Panc1 (cell line): ENCODE measurements at regions of chr10 and their contacts with region 1.

Region 1: DNA sequence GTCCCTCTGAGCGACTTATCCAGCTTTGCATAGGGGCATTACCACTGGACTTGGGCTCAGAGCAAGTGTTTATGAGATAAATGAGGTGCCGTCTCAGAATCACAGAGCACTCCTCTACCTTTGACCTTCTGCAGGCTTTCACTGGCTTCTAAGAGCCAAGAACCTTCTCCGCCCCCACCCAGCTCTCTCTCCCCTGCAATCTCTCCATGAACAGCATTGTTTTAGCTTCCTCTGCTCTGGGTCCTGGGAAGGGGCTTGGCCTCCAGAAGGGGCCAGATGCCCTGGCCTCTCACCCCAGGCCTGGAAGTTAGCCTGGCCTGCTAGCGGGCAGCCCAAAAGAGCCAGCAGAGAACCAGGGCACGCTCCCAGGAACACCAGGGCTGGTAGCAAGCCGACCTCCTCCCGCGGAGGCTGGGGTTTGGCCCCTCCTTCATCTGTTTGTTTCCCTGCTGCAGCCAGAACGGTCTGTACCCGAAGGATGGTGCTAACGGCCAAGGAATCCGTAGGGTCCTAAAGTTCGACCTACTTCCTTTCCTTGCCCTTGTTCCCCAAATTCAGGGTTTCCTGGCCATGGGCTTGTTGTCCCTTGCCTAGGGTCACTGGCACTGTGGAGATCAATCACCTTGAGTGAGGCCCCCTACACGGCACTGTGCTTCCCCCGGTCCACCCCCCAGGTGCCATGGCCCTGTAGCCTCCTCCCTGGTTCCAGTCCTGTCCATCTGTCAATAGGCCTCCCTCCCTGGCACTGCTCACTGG is 18.7 kb upstream of the DDIT4 start:
- DNase-seq: no peak
- ATAC-seq: peak; percentile 94
- H3K4me3 ChIP-seq: peak overlapping the region in 1 of 2 experiments; percentile 34; a peak in 2 of 4 replicates
- H3K27ac ChIP-seq: peak overlapping the region; percentile 92
- H3K4me1 ChIP-seq: peaks cover 32% of the 10 kb centered on the region
- H3K27me3 ChIP-seq: no peaks in the 10 kb centered on the region
- CTCF ChIP-seq: no peak

Region 2: DNA sequence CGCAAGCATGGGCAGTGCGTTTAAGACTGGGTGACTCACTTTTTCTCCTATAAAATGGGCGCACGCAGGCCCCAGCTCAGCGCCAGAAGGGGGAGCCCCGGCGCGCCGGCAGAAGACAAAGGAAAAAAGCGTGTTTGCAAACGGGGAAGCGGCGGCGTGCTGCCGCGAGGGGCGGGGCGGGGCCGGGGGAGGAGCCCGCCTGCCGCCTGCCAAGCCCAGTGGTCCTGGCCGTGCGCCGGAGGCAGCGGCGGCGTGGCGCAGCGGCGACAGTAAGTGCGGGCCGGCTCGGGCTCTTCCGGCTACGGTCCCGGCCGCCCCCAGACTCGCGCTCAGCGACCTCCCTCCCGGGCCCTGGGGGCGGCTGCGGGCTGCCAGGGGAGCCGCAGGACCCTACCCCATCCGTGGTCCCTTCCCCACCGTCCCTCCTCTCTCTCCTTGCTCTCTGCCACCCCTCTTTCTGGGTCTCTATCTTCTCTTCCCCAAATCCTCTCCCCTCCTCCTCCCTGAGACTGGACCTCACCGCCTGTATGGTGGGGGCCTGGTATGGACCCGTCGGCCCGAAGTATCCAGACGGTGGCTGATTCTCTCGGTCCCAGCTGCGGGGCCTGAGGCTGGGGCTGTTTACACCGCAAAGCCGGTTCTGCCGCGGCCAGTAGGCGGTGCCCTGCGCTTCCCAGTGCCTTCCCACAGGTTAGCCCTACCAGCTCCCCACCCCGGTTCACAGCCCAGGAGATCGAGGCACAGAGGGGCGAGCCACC is 935.8 kb before region 1 on chr10 and contains the start of gene SLC29A3:
- CTCF ChIA-PET with region 1: no interaction called
- POLR2A ChIA-PET with region 1: no interaction called
- in situ Hi-C with region 1: no loop called
- intact Hi-C with region 1: no loop called
- DNase-seq: no peak
- ATAC-seq: peak; percentile 95
- H3K4me3 ChIP-seq: peak within 1 kb of the TSS; percentile 75 to 80
- H3K27ac ChIP-seq: peak within 1 kb of the TSS; percentile 69
- H3K4me1 ChIP-seq: peaks cover 10% of the 10 kb centered on the region
- H3K27me3 ChIP-seq: no peaks in the 10 kb centered on the region
- CTCF ChIP-seq: peak; percentile 93
- total RNA-seq, gene SLC29A3: 7.6 TPM

Region 3: GRCh38 chr10:71963756-71964668 is 291.0 kb before region 1 on chr10 and contains the start of gene CHST3:
- CTCF ChIA-PET with region 1: no interaction called
- POLR2A ChIA-PET with region 1: interaction called, 16 read pairs
- in situ Hi-C with region 1: no loop called
- intact Hi-C with region 1: no loop called
- DNase-seq: no peak
- ATAC-seq: peak; percentile 74
- H3K4me3 ChIP-seq: peak within 1 kb of the TSS; percentile 88 to 89
- H3K27ac ChIP-seq: peak within 1 kb of the TSS; percentile 97
- H3K4me1 ChIP-seq: peaks cover 36% of the 10 kb centered on the region
- H3K27me3 ChIP-seq: no peaks in the 10 kb centered on the region
- CTCF ChIP-seq: no peak
- total RNA-seq, gene CHST3: 44.6 TPM

Region 4: DNA sequence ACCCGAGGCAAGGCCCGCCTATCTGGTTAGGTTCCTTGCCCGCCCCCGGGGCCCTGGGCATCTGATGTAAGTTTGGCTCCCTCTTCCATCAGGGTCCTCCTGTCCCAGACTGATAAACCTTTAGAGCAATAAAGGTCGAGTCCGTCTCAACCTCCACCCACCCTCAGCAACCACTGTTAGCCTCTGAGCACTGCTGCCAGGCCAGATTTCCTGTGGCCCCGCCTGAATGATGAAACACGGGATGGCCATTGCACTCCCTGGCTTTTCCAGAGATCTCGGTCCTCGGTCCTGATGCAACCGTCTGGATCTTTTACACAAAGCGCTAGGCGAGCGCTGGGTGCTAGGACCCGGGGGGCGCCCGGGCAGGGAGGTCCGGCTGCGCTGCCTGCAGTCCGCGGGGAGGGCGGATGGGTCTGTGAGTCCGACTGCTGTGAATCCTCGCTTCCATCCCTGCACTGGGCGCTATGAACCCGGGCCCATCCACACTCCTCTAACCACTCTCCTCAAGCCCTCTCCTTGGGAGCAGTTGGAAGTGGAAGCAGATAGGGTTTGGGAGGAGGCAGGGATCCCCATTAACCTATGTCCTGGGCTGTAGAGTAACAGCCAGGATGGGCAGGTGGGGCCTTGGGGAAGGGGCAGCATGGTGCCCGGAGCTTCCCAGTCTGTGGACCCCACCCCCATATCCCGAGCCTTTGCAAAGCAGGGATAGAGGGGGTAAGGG is 17.9 kb after region 1 on chr10:
- CTCF ChIA-PET with region 1: no interaction called
- POLR2A ChIA-PET with region 1: no interaction called
- in situ Hi-C with region 1: no loop called
- intact Hi-C with region 1: no loop called
- DNase-seq: no peak
- ATAC-seq: peak; percentile 52
- H3K4me3 ChIP-seq: peak overlapping the region; percentile 78 to 93
- H3K27ac ChIP-seq: peak overlapping the region; percentile 84
- H3K4me1 ChIP-seq: peaks cover 32% of the 10 kb centered on the region
- H3K27me3 ChIP-seq: no peaks in the 10 kb centered on the region
- CTCF ChIP-seq: no peak

Region 5: DNA sequence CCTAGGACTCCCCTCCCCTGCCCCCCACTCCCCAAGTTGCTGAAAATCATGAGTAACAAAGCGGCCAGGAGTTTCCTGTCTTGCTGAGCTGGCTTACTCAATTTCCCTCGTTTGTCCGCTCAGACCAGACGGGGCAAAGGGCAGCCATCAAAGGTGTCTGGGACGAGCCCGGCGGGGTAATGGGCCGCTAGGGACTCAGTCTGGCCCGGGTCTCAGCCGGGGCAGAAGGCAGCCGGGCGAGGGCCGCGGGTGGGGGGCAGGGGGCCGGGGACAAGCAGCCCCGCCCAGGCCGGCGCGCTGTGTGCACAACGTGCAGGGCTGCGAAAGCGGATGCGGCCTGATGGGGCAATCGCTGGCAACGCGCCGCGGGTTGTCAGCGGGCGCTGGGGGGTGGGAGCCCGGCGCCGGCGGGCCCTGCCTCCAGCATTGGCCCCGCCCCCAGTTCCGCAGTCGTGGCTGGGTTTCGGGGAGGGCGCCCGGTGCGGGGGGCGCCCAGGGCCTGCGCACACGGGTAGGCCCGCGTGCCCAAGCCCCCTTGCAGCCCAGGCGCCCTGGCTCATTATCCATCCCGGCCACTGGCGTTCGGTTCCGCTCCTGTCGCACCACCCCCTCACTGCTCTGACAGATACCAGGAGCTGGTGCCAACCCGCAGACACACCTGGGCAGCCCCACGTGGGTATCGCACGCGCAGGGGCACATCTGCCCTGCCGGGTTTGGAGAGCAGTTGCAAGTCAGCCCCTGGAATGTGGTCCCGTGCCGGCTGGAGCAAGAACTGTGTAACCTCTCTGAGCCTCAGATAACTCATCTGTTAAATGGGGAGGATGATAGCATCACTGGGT is 64.6 kb after region 1 on chr10:
- CTCF ChIA-PET with region 1: interaction called, 6 read pairs
- POLR2A ChIA-PET with region 1: interaction called, 14 read pairs
- in situ Hi-C with region 1: no loop called
- intact Hi-C with region 1: no loop called
- DNase-seq: no peak
- ATAC-seq: peak; percentile 74
- H3K4me3 ChIP-seq: peak overlapping the region; percentile 15 to 22; a peak in 3 of 4 replicates
- H3K27ac ChIP-seq: peak overlapping the region; percentile 89
- H3K4me1 ChIP-seq: peaks cover 92% of the 10 kb centered on the region
- H3K27me3 ChIP-seq: no peaks in the 10 kb centered on the region
- CTCF ChIP-seq: no peak

Region 6: DNA sequence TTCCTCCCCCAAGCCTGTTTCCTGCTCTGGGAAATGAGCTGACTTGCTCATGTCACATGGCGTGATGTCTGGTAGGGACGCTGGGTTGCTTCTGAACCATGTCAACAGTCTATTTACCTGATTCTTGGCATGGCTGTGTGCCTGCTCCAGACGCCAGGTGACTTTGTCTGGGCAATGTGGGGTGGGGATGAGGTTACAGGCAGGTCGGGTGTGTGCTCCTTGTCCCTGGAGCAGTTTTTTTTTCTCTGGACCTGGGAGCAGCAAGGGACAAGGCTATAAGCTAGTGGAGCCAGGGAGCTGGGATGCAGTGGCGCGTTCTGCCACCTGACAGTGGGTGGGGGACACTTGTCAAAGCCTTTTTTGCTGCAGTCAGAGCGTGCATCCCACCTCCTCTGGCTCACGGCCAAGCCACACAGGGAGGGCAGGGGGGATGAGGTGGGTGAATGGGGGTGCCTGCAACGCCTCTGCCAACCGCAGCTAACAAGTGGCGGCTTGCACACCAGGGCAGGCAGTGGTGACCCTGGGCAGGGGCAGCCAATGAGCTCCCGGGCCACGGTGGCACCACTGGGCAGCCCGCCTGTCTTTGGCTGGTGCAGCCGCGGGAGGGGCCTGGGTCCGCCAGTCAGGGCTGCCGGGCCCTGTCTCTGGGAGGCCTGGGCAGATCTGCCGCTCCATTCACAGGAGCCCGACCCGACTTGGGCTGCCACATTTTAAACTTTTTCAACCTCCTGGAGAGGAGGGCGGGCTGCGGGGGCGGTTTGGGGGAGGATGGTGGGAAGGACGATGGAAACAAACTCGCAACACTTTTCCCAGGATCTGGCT is 76.8 kb after region 1 on chr10:
- CTCF ChIA-PET with region 1: no interaction called
- POLR2A ChIA-PET with region 1: interaction called, 17 read pairs
- in situ Hi-C with region 1: no loop called
- intact Hi-C with region 1: no loop called
- DNase-seq: no peak
- ATAC-seq: peak; percentile 63
- H3K4me3 ChIP-seq: no peak overlapping the region
- H3K27ac ChIP-seq: peak overlapping the region; percentile 88
- H3K4me1 ChIP-seq: peaks cover 66% of the 10 kb centered on the region
- H3K27me3 ChIP-seq: no peaks in the 10 kb centered on the region
- CTCF ChIP-seq: no peak